ENCODE measurements at regions of chr19 and their contacts with region 1.

Region 1: DNA sequence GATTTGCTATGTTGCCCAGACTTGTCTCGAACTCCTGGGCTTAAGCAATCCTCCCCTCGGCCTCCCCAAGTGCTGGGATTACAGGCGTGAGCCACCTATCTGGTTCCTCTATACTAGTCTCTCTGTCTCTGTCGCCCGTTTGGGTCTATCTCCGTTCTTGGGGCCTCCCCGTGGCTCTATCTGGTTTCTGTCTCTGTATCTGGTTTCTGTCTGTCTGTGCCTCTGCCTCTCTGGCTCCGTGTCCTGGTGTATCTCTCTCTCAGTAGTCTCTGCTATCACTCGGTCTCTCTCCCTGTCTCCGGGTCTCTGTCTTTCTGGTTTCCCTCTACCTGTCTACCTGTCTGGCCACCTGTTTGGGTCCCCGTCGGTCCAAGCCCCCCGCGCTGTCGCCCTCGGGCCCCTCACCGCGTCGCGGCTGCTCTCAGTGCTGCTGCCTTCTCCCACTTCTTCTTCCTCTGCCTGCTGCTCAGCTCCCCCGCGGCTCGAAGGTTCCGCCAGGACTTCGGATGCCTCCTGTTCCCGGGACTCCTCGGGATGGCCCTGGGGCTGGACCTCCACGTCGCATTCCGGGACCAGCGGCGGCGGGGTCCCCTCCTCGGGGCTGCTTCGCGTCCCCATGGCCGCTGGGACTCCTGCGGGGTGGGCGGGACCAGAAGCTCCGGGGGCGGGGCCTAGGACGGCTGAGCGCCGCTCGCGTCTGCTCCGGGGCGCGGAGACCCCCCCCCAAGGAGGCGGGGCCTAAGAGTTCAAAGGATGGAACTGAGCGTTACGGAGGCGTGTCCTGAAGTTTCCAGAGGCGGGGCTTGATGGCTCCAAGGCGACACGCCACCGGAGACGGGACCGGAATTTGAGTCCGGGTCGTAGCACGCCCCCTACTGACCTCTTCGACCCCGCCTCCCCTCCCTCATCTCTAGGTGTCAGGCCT is 783 bp downstream of the PHLDB3 start:
- DNase-seq: peak; percentile 96 to 100 (median 99)
- ATAC-seq: peak; percentile 91 to 98 (median 94)
- H3K4me3 ChIP-seq: peak overlapping the region; percentile 75 to 78
- H3K4me3 Mint-ChIP-seq: peak overlapping the region; percentile 88 to 97 (median 90)
- H3K27ac ChIP-seq: peak overlapping the region; percentile 83
- H3K27ac Mint-ChIP-seq: peak overlapping the region; percentile 96 to 97
- H3K4me1 ChIP-seq: peaks cover 2 to 34% of the 10 kb centered on the region in 2 experiments
- H3K4me1 Mint-ChIP-seq: peaks cover 38 to 42% (median 40%) of the 10 kb centered on the region in 3 donors
- H3K27me3 ChIP-seq: no peaks in the 10 kb centered on the region
- H3K27me3 Mint-ChIP-seq: no peaks in the 10 kb centered on the region

Region 2: GRCh38 chr19:43479961-43480561 is 23.7 kb before region 1 on chr19:
- CTCF ChIA-PET with region 1: interaction called, 9 to 12 read pairs
- POLR2A ChIA-PET with region 1: no interaction called
- DNase-seq: no peak
- ATAC-seq: no peak
- H3K4me3 ChIP-seq: no peak overlapping the region
- H3K4me3 Mint-ChIP-seq: no peak overlapping the region
- H3K27ac ChIP-seq: no peak overlapping the region
- H3K27ac Mint-ChIP-seq: no peak overlapping the region
- H3K4me1 ChIP-seq: peaks cover 2 to 12% of the 10 kb centered on the region in 2 experiments
- H3K4me1 Mint-ChIP-seq: peaks cover 7 to 12% (median 10%) of the 10 kb centered on the region in 3 donors
- H3K27me3 ChIP-seq: no peaks in the 10 kb centered on the region
- H3K27me3 Mint-ChIP-seq: no peaks in the 10 kb centered on the region